ENCODE measurements at regions of chr11 and their contacts with region 1.

Region 1: DNA sequence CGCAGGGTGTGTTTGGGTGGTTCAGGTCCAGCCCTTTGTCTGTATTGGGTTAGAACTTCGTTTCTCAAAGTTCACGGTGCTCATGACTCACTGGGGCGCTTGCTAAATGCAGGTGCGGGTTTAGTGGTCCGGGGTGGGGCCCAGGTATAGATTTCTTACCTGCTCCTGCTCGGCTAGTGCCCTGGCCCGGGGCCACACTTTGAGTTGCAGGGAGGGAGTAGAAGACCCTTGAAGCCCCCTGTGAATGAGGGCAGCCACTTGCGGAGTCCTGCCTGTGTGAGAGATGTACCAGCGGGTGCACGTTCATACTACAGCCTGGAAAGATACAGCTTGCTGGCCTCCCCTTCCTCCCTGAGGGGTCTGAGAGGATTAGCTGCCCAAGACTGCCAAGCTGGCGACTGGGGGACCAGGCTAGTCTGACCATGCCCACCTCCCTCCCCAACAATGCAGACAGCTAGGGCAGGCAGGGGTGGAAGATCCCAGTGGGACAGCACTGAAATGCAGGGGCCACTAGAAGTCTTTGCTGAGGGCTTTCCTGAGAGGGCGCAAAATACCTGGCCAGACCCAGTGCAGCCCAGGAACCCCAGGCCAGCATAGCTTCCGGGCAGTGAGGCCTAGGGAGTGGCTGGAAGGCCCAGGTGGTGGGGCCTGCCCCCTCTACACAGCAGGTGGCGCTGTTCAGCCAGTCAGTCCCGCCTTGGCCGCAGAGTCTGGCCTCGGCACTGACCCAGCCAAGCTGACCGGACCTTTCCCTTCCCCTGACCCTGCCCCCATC is 5.1 kb upstream of the MYRF start:
- DNase-seq: peak; percentile 53
- H3K4me3 Mint-ChIP-seq: no peak overlapping the region
- H3K27ac Mint-ChIP-seq: no peak overlapping the region
- H3K4me1 Mint-ChIP-seq: peaks cover 4% of the 10 kb centered on the region
- H3K27me3 Mint-ChIP-seq: peaks cover 17% of the 10 kb centered on the region

Region 2: DNA sequence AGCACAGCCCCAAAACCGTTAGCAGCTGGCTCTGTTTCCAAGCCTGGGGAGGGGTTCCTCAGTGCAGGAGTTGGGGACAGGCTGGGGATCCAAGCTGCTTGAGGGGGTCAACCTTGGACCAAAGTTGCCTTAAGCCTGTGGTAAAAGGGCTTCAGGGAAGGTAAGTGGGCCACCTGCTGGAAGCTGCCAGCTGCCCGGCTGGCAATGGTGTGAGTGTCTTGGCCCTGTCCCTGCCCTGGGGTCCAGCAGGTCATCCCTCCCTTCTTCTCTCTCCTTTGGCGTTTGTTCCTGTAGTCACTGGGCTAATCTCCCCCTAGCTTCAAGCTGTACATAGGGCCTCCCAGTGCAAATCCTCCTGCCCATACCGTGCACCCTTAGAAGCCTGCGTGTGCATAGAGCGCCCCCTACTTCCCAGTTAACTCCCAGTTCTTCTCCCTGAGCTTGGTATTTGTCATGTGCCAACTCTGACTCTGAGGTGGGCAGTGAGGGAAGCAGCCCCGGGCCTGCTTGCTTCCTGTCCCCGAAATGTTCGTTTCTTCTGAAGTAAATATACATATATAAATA is 40.6 kb after region 1 on chr11:
- CTCF ChIA-PET with region 1: interaction called, 11 read pairs
- POLR2A ChIA-PET with region 1: no interaction called
- DNase-seq: peak; percentile 30
- H3K4me3 Mint-ChIP-seq: no peak overlapping the region
- H3K27ac Mint-ChIP-seq: no peak overlapping the region
- H3K4me1 Mint-ChIP-seq: peaks cover 20% of the 10 kb centered on the region
- H3K27me3 Mint-ChIP-seq: no peaks in the 10 kb centered on the region

Measured in activated CD4-positive, alpha-beta T cell treated with anti-CD3 and anti-CD28 coated beads, Interleukin-2, amount 10 ng/mL, durations not matched to agents 7 days and 5 days (primary cell).